Activated CD4-positive, alpha-beta T cell treated with anti-CD3 and anti-CD28 coated beads for 36 hours (primary cell): ENCODE measurements at regions of chr1 and their contacts with region 1.

Region 1: DNA sequence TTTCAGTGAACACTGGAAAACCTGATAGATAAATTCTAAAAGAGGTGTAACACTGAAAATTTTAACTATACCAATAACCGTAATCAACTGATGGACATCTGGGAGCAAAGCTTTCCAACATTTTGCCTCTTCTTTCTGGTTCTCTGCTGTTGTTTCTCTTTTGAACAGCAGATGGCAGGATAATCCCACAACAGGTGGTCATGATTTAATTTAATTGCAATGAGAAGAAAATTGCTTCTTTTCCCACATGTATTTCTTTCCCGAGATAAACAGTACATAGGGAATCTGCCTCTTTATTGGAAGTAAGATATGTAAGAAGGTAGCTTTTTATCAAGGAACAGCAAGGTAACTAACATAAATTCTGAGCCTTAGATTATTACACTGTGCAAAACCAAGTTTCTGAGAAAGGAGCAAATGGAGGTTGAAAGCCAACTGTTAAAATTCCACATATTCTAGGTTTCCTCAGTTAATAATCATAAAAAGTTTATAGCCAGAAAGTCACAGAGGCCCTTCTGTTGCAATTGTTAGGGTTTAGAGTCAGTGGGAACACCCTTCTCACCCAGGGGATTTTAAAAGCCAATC is 72.9 kb downstream of the RPS6KA1 start:
- DNase-seq: peak; percentile 45
- ATAC-seq: peak; percentile 63
- H3K4me3 Mint-ChIP-seq: no peak overlapping the region
- H3K27ac Mint-ChIP-seq: no peak overlapping the region
- H3K4me1 Mint-ChIP-seq: peaks cover 3% of the 10 kb centered on the region
- H3K27me3 Mint-ChIP-seq: no peaks in the 10 kb centered on the region

Region 2: DNA sequence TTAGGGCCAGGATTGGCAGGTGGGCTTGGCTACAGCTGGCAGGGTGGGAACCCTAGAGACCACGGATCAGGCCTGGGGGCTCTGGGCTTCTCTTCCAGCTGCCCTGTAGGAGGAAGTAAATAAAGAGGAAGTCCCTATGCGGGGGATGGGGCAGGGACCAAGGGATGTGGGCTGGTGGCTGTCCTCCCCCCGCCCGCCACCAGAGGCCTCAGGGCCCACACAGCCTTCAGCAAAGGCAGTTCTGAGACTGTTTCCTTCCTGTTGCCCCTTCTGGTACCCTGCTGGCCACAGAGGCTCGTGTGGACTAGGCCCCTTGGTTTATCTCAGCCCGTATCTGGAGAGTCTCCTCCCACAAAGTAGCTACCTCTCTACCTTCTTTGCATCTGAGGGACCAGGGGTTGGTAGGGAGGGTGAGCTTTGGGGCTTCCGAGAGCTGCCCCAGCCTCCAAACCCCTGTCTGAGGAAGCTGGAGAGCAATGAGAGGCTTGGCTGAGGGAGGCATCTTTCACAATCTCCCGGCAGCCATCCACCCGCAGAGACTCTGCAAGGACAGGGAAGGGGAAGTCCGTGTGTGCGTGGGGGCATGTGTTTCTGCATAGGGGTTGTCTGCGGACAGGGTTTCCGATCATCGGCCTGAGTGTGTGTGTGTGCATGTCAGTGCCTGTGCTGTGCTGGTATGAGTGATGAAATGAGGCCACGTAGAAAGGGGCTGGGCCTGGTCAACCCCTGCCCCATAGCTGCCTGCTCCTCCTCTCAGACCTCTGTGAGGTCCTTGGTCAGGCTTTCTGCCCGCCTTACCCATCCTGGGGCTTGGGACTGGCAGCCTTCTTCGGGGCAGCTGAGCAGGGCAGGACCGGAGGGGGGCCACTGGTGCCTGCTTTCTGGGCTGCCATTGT is 60.4 kb before region 1 on chr1:
- CTCF ChIA-PET with region 1: interaction called, 10 read pairs
- POLR2A ChIA-PET with region 1: no interaction called
- intact Hi-C with region 1: no loop called
- DNase-seq: peak; percentile 93
- ATAC-seq: peak; percentile 65
- H3K4me3 Mint-ChIP-seq: peak overlapping the region; percentile 67
- H3K27ac Mint-ChIP-seq: peak overlapping the region; percentile 94
- H3K4me1 Mint-ChIP-seq: peaks cover 83% of the 10 kb centered on the region
- H3K27me3 Mint-ChIP-seq: no peaks in the 10 kb centered on the region

Region 3: DNA sequence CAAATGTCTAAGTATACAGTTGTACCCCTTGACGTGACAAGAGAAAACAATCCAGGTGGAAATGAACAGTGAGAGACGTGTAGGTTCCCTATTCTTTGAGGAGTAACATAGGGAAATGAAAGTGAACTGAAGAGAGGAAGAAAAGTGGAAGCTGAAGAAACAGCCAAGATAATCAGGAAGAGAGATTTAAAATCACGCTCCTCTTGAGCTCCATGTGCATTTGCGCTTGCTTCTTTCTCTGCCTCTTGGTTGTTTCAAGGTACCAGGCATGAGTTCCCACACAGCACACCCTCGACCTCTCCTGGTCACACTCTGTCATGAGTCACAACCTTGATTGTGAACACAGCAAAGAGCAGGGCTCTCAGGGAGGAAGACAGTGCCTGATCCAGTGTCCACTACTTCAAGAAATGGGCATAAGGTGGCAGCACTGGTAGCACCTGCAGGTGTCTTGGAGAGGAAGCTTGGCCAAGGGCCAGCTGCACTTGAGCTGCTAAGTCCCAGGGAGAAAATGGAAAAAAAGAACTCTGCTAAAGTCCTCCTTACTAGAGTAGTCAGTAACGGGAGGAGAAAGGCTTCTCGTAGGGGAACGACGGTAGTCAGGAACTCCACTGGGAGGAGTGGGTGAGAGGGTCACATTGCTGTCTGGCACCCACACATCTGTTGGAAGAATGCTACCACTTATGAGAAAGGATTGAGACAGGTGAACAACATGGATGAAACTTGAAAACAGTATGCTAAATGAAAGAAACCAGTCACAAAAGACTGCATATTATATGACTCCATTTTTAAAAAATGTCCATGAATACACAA is 75.0 kb after region 1 on chr1:
- CTCF ChIA-PET with region 1: interaction called, 6 read pairs
- POLR2A ChIA-PET with region 1: no interaction called
- intact Hi-C with region 1: loop called in 1 of 2 experiments (anchors 1 kb)
- DNase-seq: peak; percentile 74
- ATAC-seq: peak; percentile 100
- H3K4me3 Mint-ChIP-seq: peak overlapping the region; percentile 1
- H3K27ac Mint-ChIP-seq: peak overlapping the region; percentile 48
- H3K4me1 Mint-ChIP-seq: peaks cover 15% of the 10 kb centered on the region
- H3K27me3 Mint-ChIP-seq: no peaks in the 10 kb centered on the region

Region 4: DNA sequence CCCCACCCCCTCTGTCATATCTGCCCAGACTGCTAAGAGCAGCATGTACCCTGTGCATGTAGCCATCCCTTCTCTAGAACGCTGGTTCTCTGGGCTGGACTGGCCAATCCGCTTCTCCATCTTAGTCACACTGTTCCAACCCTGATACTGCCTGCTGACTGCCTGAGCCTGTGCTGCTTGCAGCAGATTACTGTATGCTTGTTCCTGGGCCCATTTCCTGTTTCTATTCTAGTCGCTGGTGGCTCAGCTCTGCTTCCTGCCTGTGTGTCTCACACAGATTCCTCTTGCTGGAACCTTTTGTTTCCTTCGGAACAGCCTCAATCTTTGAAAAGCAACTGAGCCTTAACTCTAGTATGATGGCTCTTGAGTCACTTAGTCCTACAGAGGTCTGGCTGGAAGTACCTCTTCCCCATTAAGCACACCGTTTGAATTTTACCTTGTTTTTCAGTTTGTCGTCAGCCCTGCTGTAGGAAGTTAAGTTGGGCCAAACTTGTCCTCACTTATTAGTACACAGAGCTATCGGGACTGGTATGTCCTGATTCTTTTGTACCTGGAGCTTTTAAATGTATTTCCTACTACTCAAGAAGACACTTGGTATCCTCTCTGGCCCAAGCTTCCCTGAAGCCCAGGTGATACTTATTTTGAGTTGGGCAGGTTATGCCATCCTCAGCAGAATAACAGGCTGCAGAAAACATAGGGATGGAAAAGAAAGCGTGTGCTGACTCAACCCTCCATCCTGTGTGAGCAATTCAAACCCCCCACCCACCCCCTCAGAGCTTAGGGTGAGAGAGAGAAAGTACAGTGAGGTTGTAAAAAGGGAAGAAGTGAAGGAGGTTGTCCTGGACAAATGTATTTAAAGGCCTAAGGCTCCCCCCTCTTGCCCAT is 141.8 kb after region 1 on chr1:
- CTCF ChIA-PET with region 1: interaction called, 14 read pairs
- POLR2A ChIA-PET with region 1: no interaction called
- intact Hi-C with region 1: no loop called
- DNase-seq: peak; percentile 90
- ATAC-seq: peak; percentile 93
- H3K4me3 Mint-ChIP-seq: peak overlapping the region; percentile 67
- H3K27ac Mint-ChIP-seq: peak overlapping the region; percentile 97
- H3K4me1 Mint-ChIP-seq: peaks cover 93% of the 10 kb centered on the region
- H3K27me3 Mint-ChIP-seq: no peaks in the 10 kb centered on the region

Region 5: GRCh38 chr1:26833432-26834405 is 231.2 kb after region 1 on chr1:
- CTCF ChIA-PET with region 1: interaction called, 12 read pairs
- POLR2A ChIA-PET with region 1: no interaction called
- intact Hi-C with region 1: no loop called
- DNase-seq: peak; percentile 93
- ATAC-seq: peak; percentile 95
- H3K4me3 Mint-ChIP-seq: peak overlapping the region; percentile 70
- H3K27ac Mint-ChIP-seq: peak overlapping the region; percentile 99
- H3K4me1 Mint-ChIP-seq: peaks cover 69% of the 10 kb centered on the region
- H3K27me3 Mint-ChIP-seq: no peaks in the 10 kb centered on the region

Region 6: DNA sequence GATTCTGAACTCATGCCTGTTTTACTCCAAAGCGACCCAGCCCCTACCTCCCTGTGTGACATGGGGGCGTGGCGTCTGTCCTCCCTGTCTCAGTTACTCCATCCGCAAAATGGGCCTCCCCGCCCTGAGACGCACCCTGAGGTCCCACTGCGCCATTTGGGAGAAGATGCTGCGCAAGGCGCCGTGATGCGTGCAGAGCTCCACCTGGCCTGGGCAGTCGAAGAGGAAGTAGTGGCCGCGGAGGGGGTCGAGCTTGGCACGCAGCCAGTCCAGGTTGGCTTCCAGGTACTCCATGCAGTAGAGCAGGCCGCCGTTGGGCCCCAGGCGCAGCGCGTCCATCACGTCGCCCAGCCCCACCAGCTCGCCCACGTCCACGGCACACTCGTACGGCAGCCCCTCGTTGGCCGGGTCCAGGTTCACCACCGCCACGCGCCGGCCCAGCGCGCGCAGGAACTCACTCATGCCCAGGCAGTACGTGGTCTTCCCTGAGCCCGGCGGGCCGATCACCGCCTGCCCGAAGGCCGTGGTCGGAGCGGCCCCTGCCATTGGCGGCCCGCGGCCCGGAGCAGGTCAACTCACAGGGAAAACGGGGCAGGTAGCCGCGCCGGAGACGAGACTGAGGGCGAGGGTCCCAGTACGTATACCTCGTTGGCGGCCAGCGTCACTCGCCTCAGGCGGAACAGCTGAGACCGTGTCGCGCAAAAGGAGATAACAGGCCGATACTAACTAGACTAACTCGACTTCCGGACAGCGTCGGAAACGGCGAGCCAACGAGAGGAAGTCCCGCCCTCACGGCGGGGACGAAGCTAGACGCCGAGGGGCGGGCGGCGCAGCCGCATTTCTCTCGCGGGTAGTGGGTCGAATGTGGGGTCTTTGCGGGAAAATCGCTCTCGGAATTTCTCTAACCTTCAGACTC is 287.3 kb after region 1 on chr1 and contains the start of gene GPN2:
- CTCF ChIA-PET with region 1: interaction called, 12 read pairs
- POLR2A ChIA-PET with region 1: no interaction called
- intact Hi-C with region 1: no loop called
- DNase-seq: peak; percentile 86
- ATAC-seq: peak; percentile 97
- H3K4me3 Mint-ChIP-seq: peak within 1 kb of the TSS; percentile 92
- H3K27ac Mint-ChIP-seq: peak within 1 kb of the TSS; percentile 91
- H3K4me1 Mint-ChIP-seq: peaks cover 22% of the 10 kb centered on the region
- H3K27me3 Mint-ChIP-seq: no peaks in the 10 kb centered on the region
- total RNA-seq, gene GPN2: 44.3 to 45.6 TPM